ENCODE measurements at regions of chr7 and their contacts with region 1.

Region 1: DNA sequence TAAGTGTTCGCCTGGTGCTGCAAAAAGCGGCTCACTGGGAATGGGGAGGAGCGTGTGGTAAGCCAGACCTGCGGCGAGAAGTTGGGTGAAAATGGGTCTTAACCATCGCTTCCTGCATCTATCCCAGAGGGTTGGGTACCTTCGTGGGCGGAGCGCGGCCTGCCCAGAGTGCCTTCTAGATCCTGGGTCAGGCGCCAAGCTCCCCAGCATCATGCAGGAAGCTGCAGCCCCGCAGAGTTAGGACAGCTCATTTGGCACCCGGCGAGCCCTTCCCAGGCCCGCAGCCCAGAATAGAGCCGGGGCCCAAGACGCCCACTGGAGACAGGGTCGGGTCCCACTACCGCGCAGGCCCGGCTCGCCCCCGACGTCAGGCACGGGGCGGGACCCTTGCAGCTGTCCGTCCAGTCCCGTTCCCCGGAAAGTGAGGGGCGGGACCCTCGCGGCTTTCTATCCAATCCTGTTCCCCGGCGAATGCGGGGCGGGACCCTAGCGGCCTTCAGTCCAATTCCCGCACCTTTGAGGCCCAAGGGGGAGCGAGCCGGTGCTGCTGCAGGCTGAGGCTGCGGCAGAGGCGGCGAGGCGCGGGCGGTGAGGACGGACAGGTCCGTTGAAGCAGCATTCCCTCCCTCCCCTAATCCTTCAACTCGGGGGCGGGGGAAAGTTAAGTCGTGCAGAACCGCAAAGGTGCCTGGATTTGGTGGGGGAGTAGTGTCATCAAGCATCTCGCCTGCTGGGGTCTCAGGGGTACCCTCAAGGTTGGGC is at the start of gene CROT:
- DNase-seq: peak; percentile 95
- ATAC-seq: peak; percentile 99
- H3K4me3 Mint-ChIP-seq: peak within 1 kb of the TSS; percentile 94
- H3K27ac Mint-ChIP-seq: peak within 1 kb of the TSS; percentile 85
- H3K4me1 Mint-ChIP-seq: peaks cover 37% of the 10 kb centered on the region
- H3K27me3 Mint-ChIP-seq: no peaks in the 10 kb centered on the region
- total RNA-seq, gene CROT: 13.0 to 13.8 TPM

Region 2: DNA sequence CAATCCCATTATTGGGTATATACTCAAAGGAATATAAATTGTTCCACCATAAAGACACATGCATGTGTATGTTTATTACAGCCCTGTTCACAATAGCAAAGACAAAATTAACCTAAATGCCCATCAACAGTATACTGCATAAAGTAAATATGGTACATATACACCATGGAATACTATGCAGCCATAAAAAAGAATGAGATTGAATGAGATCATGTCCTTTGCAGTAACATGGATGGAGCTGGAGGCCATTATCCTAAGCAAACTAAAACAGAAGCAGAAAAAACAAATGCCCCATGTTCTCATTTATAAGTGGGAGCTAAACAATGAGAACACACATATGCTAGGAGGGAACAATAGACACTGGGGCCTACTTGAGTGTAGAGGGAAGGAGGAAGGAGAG is 44.6 kb before region 1 on chr7:
- POLR2A ChIA-PET with region 1: no interaction called
- DNase-seq: no peak
- ATAC-seq: no peak
- H3K4me3 Mint-ChIP-seq: no peak overlapping the region
- H3K27ac Mint-ChIP-seq: no peak overlapping the region
- H3K4me1 Mint-ChIP-seq: no peaks in the 10 kb centered on the region
- H3K27me3 Mint-ChIP-seq: peaks cover 4% of the 10 kb centered on the region

Region 3: GRCh38 chr7:87370660-87371180 is 25.4 kb after region 1 on chr7:
- POLR2A ChIA-PET with region 1: interaction called, 10 read pairs
- DNase-seq: no peak
- ATAC-seq: no peak
- H3K4me3 Mint-ChIP-seq: no peak overlapping the region
- H3K27ac Mint-ChIP-seq: no peak overlapping the region
- H3K4me1 Mint-ChIP-seq: peaks cover 6% of the 10 kb centered on the region
- H3K27me3 Mint-ChIP-seq: no peaks in the 10 kb centered on the region

Region 4: DNA sequence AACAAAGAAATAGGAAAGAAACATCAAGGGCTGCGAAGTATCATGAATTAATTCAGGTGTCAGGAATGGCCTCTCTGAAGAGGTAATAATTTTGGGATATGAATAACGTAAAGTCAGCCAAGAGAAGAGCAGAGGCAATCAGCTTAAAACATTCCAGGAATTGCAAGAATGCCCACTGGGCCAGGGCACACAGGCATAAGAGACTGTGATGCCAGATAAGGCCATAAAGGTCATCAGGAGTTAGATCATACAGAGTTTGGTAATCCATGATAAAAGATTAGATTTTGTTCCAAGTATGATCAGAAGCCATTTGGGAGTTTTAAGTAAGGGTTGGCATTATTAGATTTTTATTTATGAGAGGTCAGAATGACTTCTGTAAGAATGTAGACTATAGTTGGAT is 183.4 kb after region 1 on chr7:
- POLR2A ChIA-PET with region 1: no interaction called
- DNase-seq: no peak
- ATAC-seq: no peak
- H3K4me3 Mint-ChIP-seq: no peak overlapping the region
- H3K27ac Mint-ChIP-seq: no peak overlapping the region
- H3K4me1 Mint-ChIP-seq: peaks cover 2% of the 10 kb centered on the region
- H3K27me3 Mint-ChIP-seq: no peaks in the 10 kb centered on the region

Measured in activated naive CD8-positive, alpha-beta T cell treated with anti-CD3 and anti-CD28 coated beads, Interleukin-2, amount 10 ng/mL, durations not matched to agents 7 days and 5 days (primary cell).